ENCODE measurements at regions of chr15 and their contacts with region 1.

Region 1: GRCh38 chr15:44489464-44489863 is 47.5 kb upstream of the EIF3J start:
- DNase-seq: peak; percentile 86
- H3K4me3 ChIP-seq: no peak overlapping the region
- H3K27ac ChIP-seq: peak overlapping the region; percentile 11; the same call in 1 of the 2 replicates
- H3K4me1 ChIP-seq: peaks cover 20% of the 10 kb centered on the region
- H3K27me3 ChIP-seq: no peaks in the 10 kb centered on the region

Region 2: GRCh38 chr15:43881944-43882343 is 607.5 kb before region 1 on chr15:
- in situ Hi-C with region 1: loop called (anchors 25 kb)
- DNase-seq: peak; percentile 12
- H3K4me3 ChIP-seq: no peak overlapping the region
- H3K27ac ChIP-seq: no peak overlapping the region
- H3K4me1 ChIP-seq: no peaks in the 10 kb centered on the region
- H3K27me3 ChIP-seq: no peaks in the 10 kb centered on the region

Region 3: DNA sequence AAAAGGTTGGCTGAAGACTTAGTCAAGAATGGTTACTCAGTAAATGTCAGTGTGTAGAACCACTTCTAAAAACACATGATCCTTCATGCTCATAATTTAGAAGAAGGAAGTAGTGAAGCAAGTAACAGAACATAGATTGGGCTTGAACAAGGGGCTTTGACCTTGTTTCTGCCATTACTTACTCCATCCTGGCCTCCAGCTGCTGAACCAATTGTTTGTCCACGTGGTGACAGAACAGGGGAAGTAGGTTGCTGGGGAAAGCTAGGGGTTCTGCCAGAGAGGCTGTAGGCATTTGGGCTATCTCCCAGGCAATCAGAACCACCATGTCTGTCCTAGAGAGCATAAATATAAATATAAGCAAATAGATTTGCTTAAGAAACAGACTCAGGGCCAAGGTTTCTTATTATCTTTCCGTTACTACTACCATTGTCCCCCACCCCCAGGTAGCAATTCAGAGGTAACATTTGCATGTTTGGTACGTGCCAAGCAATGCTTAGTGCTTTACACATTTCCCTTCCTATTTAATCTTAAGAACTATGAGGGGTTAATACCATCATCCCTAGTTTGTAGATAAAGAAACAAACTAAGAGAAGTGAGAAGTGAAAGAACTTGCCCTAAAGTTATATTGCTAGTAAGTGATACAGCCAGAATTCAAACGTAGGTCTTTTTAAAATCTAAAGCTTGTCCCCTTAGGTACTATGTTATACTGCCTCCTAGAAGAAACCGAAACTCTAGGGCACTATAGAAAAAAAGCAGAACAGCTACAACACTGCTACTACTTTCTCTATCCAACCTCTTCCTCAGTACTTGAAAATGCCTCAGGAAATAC is 177.0 kb after region 1 on chr15:
- in situ Hi-C with region 1: no loop called
- DNase-seq: no peak
- H3K4me3 ChIP-seq: no peak overlapping the region
- H3K27ac ChIP-seq: no peak overlapping the region
- H3K4me1 ChIP-seq: peaks cover 10% of the 10 kb centered on the region
- H3K27me3 ChIP-seq: no peaks in the 10 kb centered on the region